ENCODE measurements at regions of chr6 and their contacts with region 1.

Region 1: DNA sequence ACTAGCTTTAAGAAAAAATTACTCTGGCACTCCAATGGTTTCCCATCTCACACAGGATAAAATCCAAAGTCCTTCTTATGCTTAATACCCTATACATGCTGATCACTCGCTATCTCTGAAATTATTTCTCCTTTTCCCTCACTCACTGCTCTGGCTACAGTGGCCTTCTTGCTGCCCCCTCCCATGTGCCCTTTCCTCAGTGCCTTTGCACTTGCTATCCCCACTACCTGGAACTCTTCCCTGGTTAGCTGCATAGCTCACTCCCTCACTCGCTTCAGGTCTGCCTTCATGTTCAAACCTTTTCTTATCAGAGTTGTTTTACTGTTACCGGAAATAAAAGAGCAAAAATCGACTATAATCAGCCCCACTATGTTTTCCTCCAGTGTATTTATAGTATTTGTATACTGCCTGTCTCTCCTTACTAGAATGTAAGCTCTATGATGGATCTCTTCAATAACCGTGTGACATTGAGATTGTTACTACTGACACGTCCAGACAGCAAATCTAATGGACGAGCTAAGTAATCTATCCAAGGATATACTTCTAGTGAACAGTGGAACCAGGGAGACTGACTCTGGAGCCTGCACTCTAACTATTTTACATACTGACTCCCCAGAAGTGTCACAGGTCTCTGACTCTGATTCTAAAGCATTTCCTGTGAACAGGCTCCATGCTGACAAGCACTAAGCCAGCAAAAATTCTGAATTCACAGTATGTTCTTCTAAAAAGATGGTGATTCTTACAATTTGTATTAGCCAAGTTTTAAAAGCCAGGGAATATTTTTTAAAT is 25.1 kb downstream of the FKBP5 start:
- DNase-seq: no peak

Region 2: GRCh38 chr6:35359751-35360348 is 303.8 kb before region 1 on chr6:
- intact Hi-C with region 1: loop called in 1 of 2 experiments (anchors 10 kb)
- DNase-seq: no peak